Prostate gland (tissue), 2 donors: ENCODE measurements at regions of chr5 and their contacts with region 1.

Region 1: GRCh38 chr5:81851481-81852178 is 100.7 kb upstream of the SSBP2 start:
- DNase-seq: peak; percentile 94
- H3K4me3 ChIP-seq: peak overlapping the region; percentile 32 to 36
- H3K27ac ChIP-seq: peak overlapping the region; percentile 75 to 82
- H3K4me1 ChIP-seq: no peaks in the 10 kb centered on the region
- H3K27me3 ChIP-seq: no peaks in the 10 kb centered on the region
- CTCF ChIP-seq: peak in 2 of 4 experiments; percentile 29 to 31
- POLR2A ChIP-seq: peak; percentile 29

Region 2: GRCh38 chr5:81506900-81507588 is 344.6 kb before region 1 on chr5:
- intact Hi-C with region 1: loop called (anchors 5 kb)
- DNase-seq: peak; percentile 57
- H3K4me3 ChIP-seq: no peak overlapping the region
- H3K27ac ChIP-seq: no peak overlapping the region
- H3K4me1 ChIP-seq: no peaks in the 10 kb centered on the region
- H3K27me3 ChIP-seq: no peaks in the 10 kb centered on the region
- CTCF ChIP-seq: peak; percentile 55 to 85 (median 76)
- POLR2A ChIP-seq: no peak

Region 3: DNA sequence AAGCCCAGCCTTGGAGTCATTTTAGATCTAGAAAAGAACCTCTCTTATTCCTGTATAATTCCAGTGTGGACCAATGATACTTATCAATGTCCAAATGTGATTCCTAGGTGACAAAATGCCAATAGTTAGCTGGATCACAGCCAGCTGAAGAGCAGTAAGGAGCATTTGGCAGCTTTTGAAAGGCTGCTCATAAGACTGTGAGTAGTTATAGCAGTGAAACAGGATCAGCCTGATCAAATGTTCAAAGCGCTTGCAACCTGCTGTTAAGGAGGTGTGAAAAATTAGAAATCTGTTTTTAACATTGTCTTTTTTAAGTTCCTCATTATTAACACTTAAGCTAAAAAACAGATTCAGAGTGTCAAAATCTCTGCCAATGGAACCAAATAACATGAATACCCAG is 185.8 kb before region 1 on chr5:
- intact Hi-C with region 1: no loop called
- DNase-seq: no peak
- H3K4me3 ChIP-seq: no peak overlapping the region
- H3K27ac ChIP-seq: no peak overlapping the region
- H3K4me1 ChIP-seq: no peaks in the 10 kb centered on the region
- H3K27me3 ChIP-seq: no peaks in the 10 kb centered on the region
- CTCF ChIP-seq: no peak
- POLR2A ChIP-seq: no peak

Region 4: DNA sequence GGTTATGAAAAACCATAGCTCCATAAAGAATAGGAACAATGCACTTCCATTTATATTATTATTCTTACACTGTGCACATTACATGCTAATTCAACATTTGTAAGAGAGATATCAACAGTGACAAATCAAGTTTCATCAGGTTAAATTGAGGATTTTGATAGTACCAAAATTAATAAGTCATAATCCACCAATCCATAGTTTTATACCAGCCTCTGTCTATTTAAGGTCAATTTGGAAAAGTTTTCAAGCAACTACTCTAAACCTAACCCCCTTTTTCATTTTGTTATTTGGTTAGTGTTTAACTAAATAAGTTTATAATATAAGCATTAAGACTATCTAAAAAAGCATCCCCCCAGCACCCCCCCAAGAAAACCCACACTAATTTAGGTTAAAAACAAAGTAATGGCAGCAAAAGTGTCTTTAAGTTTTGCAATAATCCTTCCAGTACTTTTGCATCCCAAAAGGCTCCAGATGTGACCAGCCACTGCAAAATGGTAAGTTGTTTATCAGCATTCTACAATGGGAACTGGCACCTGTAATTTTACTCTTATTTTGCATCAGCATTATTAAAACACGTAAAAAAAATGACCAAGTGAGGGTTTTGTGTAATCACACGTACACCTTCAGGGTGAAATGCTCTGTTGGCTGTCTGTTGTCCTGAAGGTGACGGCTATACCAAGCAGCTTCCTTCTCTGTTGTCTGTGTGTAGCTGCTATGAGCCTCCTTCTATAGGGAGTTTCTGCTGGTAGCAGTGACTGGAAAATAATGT is 64.0 kb before region 1 on chr5:
- intact Hi-C with region 1: loop called (anchors 1 kb)
- DNase-seq: peak; percentile 62
- H3K4me3 ChIP-seq: no peak overlapping the region
- H3K27ac ChIP-seq: no peak overlapping the region
- H3K4me1 ChIP-seq: no peaks in the 10 kb centered on the region
- H3K27me3 ChIP-seq: no peaks in the 10 kb centered on the region
- CTCF ChIP-seq: no peak
- POLR2A ChIP-seq: no peak

Region 5: DNA sequence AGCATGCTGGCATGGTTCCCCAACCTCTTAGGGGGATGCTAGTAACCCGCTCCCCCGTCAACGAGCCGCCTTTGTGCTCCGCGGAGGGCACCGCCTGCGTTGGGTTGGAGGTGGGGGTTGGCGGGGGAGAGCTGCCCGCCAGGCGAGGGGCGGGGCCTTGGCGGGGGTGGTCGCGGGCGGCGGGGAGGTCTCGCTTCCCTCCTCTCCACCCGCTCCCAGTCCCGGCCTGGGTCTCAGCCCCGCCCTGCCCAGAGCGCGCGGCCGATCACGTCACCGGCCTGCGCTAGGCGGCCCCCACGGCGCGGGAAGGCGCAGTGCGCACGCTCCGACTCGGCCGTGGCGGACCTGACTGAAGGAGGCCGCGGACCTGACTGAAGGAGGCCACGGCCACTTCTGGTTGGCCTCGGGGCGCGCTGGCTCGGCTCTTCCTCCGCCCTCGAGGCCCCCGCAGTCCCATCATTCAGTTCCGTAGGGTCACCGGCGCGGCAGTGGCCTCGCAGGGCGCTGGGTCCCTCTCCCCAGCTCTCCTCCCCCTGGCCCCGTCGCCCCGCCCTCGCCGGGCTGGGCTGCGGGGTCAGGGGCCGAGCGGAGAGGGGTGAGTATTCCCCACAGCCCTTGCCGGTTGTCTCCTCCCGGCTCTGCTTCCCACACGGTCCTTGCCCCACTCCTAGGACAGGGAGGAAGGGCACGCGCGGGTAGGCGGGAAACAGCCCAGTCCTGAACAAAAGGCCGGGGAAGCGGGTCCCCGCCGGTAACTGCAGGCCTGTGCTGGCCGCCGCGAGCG is 120.3 kb after region 1 on chr5 and contains the start of gene ATG10:
- intact Hi-C with region 1: loop called (anchors 2 kb)
- DNase-seq: peak; percentile 87
- H3K4me3 ChIP-seq: peak within 1 kb of the TSS; percentile 68 to 79
- H3K27ac ChIP-seq: peak within 1 kb of the TSS; percentile 98
- H3K4me1 ChIP-seq: no peaks in the 10 kb centered on the region
- H3K27me3 ChIP-seq: no peaks in the 10 kb centered on the region
- CTCF ChIP-seq: no peak
- POLR2A ChIP-seq: peak; percentile 94
- total RNA-seq, gene ATG10: 3.2 to 16.7 TPM

Region 6: DNA sequence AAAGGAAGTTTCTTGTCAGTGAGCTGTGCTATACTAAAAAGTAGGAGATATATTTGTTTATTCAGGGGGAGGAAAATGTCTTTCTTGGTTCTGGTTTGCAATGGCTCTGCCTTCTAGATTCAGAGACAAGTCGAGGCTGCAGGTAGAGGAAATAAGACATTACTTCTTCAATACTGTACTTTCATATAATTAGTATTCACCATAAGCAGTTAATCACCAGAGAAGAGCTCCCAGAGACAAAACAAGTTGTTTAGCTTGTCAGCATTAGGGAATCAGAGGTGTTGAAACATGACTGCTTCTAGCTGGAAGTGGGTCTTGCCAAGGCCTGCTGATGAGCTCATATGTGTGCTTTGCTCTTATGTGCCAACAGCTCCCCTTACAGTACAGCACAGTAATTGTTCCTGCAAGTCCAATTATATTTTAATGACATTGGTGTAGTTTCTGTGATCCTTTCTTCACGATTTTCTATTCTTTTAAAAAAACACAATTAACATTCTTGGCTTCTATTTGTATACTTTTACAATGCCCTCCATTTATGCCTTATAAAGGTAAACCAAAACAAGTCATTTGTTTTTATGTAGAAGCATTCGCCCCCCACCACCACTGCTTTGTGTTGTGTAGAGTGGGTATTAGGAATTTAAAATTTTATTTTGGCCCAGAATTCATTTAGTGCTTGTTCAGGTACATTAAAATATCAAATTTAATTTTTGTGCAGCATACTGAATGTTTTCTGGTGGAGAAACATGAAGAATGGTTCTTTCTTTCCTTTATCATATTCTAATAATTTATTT is 314.3 kb after region 1 on chr5:
- intact Hi-C with region 1: loop called (anchors 2 kb)
- DNase-seq: peak; percentile 78
- H3K4me3 ChIP-seq: no peak overlapping the region
- H3K27ac ChIP-seq: peak overlapping the region; percentile 37 to 39
- H3K4me1 ChIP-seq: peaks cover 5% of the 10 kb centered on the region
- H3K27me3 ChIP-seq: no peaks in the 10 kb centered on the region
- CTCF ChIP-seq: peak in 3 of 4 experiments; percentile 71 to 84 (median 81)
- POLR2A ChIP-seq: no peak